HepG2 (cell line): ENCODE measurements at regions of chr11 and their contacts with region 1.

Region 1: GRCh38 chr11:9861860-9862725 is 198.2 kb downstream of the SWAP70 start:
- DNase-seq: peak; percentile 64
- ATAC-seq: peak; percentile 97
- H3K4me3 ChIP-seq: no peak overlapping the region
- H3K27ac ChIP-seq: no peak overlapping the region
- H3K4me1 ChIP-seq: peaks cover 28% of the 10 kb centered on the region
- H3K27me3 ChIP-seq: no peaks in the 10 kb centered on the region
- CTCF ChIP-seq: peak; percentile 89
- EP300 ChIP-seq: no peak
- POLR2A ChIP-seq: no peak
- RAD21 ChIP-seq: peak; percentile 84

Region 2: DNA sequence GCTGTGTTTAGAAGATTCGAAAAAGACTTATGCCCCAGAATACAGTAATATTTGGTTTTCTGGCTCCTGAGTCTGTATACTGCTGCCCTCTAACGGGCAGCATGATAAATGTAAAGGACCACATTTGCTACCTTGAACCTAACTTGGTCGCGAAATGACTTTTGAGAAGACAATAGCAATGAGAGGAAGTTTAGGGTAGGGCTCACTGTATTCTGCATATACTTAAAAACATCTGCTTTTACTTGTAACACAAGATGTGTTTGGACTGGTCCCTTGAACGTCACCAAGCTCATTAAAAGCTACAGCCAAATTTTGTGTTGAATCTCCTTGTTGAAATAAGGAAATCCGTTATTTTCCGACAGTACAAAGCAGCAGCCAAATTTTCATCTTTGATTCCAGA is 110.9 kb after region 1 on chr11:
- CTCF ChIA-PET with region 1: interaction called, 49 read pairs
- POLR2A ChIA-PET with region 1: no interaction called
- in situ Hi-C with region 1: loop called (anchors 5 kb)
- intact Hi-C with region 1: no loop called
- DNase-seq: peak; percentile 40
- ATAC-seq: peak; percentile 57
- H3K4me3 ChIP-seq: no peak overlapping the region
- H3K27ac ChIP-seq: no peak overlapping the region
- H3K4me1 ChIP-seq: no peaks in the 10 kb centered on the region
- H3K27me3 ChIP-seq: no peaks in the 10 kb centered on the region
- CTCF ChIP-seq: peak; percentile 79
- EP300 ChIP-seq: no peak
- POLR2A ChIP-seq: no peak
- RAD21 ChIP-seq: peak; percentile 77

Region 3: DNA sequence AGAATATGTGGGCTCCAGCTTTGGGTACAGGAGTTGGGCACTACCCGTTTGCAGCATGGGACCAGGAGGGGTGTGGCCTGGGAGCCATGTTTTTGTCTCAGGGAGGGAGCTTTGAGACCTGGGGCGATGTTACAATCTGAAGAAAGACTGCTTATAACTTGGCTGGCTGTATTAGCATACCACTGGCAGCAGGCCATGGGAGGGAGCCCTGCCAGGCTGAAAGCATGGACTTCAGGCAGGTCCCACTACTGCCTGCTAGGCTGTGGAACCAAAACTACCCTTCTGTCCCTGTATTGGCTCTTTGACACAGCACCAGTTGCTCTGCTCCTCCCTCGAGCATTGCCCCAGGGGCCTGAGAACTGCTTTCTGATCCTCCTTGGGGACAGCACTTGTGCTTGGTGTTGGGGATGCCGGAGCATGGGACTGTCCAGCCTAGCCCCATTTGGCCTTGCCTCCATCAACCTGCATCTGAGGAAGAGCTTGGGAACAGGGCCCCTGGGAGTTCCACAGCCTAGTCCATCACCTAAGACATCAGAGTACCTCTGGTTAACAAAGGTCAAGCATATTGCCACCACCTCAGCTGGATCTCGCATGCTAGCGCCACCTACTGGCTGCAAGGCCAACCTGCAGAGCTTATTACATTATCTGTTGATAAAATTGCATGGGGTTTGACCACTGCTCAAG is 214.5 kb after region 1 on chr11:
- CTCF ChIA-PET with region 1: no interaction called
- POLR2A ChIA-PET with region 1: no interaction called
- in situ Hi-C with region 1: no loop called
- intact Hi-C with region 1: loop called (anchors 5 kb)
- DNase-seq: peak; percentile 19
- ATAC-seq: peak; percentile 71
- H3K4me3 ChIP-seq: no peak overlapping the region
- H3K27ac ChIP-seq: no peak overlapping the region
- H3K4me1 ChIP-seq: no peaks in the 10 kb centered on the region
- H3K27me3 ChIP-seq: no peaks in the 10 kb centered on the region
- CTCF ChIP-seq: peak; percentile 80
- EP300 ChIP-seq: no peak
- POLR2A ChIP-seq: no peak
- RAD21 ChIP-seq: 0 out of 2 replicates have a peak, but pooled peaks have one; percentile 31

Region 4: DNA sequence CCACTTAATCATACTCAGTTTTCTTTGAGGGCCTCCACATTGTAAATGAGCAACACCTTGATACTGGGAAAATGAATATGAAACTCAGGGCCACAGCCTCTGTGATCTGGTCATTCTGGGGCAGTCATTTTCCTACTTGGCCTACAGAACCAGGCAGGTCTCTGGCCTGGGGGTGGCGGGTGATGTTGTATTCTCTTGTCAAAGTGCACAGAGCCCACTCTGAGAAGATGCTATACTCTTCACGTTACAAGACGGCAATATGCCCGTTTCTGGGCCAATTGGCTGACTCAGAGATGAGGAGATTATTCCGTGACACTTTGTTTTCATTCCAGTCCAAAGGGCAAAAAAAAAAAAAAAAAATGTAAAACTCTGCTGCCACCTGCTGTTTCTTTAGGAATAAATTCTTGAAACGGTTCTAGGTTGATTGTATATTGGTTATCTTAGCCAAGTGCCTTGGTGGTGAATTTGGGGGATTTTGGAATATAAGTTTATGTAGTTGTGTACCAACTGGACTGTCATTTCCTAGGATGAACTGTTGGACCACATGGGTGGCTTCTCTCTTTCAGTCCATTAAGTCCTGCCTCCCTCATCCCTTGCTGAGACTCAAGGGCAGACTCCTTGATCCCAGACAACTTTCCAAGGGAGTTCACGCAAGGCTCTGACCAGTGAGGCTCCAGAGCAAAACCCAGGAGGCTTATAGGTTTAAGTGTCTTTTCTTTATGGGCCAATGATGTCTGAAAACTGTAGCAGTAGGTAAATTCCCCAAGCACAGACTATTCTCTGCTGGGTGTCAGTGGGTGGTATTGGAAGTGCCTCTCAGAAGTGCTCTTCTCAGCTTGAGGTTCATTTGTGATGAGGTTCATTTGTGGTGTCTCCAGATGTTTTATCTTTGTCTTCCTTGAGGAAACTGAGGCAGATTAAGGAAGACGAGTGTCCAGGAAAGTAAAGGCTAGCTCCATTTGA is 461.0 kb after region 1 on chr11:
- CTCF ChIA-PET with region 1: interaction called, 5 read pairs
- POLR2A ChIA-PET with region 1: no interaction called
- in situ Hi-C with region 1: loop called (anchors 10 kb)
- intact Hi-C with region 1: loop called (anchors 5 kb)
- DNase-seq: peak; percentile 84
- ATAC-seq: peak; percentile 34
- H3K4me3 ChIP-seq: peak overlapping the region; percentile 38 to 56 (median 49); a peak in 5 of 6 replicates
- H3K27ac ChIP-seq: peak overlapping the region; percentile 60
- H3K4me1 ChIP-seq: peaks cover 78% of the 10 kb centered on the region
- H3K27me3 ChIP-seq: no peaks in the 10 kb centered on the region
- CTCF ChIP-seq: peak; percentile 68
- EP300 ChIP-seq: peak in 1 of 2 experiments; percentile 57; a peak in 1 of 4 replicates
- POLR2A ChIP-seq: 0 out of 4 replicates have a peak, but pooled peaks of 1 of the 2 experiments have one; percentile 29
- RAD21 ChIP-seq: peak; percentile 58; the same call in 1 of the 2 replicates